ENCODE measurements at regions of chr16 and their contacts with region 1.

Region 1: DNA sequence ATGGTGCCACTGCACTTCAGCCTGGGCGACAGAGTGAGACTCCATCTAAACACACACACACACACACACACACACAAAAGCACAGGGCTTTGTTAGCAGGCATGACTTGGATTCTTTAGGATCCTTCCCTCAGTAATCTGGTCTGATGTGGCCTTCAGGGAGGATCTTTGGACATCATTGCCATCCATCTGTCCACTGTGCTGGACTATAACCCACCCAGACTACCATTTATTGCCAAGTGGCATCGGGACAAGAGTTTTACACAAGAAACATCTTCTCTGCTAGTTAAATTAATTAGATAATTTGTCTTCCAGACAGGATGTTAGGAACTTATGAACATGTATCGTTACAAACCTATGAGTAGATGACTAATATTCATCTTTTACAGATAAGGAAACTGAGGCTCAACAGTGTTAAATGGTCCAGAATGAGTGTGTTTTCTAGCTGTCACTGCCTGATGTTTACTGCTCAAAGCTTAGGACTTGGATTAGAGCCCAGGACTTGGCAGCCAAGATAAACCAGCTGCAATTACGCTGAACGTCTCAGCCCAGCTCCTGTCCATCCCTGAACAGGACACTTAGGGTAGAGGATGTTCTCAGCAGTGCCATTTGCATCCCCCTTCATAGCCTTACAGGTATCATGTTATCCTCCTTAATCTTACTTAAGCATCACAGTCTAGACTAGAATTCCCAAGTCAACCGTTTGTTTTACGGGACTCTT is 285.8 kb downstream of the WWOX start:
- DNase-seq: no peak
- ATAC-seq: peak in 1 of 8 donors; percentile 27
- H3K4me3 ChIP-seq: no peak overlapping the region
- H3K27ac ChIP-seq: no peak overlapping the region
- H3K4me1 ChIP-seq: peaks cover 0 to 23% (median 10%) of the 10 kb centered on the region in 9 donors
- H3K27me3 ChIP-seq: no peaks in the 10 kb centered on the region
- CTCF ChIP-seq: no peak

Region 2: DNA sequence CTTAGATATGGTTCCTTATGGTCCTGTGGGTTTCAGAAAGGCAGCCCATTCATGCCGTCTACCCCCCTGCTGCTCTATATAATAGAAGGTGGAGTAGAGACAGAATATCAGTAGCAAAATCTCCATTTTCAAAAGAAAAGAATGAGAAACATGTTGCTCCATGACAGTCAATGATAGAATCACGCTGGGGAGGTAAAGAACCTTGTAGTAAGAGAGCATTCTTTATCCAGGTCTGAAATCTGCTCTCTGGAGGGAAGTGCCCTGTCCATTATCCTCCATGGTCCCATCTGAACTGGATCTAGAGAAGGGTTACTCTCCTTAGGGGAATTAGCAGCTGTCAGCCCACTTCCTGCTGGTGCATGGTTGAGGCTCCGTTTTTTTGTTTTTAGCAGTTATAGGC is 12.9 kb before region 1 on chr16:
- intact Hi-C with region 1: loop called in 1 of 10 experiments (anchors 2 kb)
- DNase-seq: no peak
- ATAC-seq: no peak
- H3K4me3 ChIP-seq: no peak overlapping the region
- H3K27ac ChIP-seq: no peak overlapping the region
- H3K4me1 ChIP-seq: peaks cover 0 to 5% (median 0%) of the 10 kb centered on the region in 9 donors
- H3K27me3 ChIP-seq: no peaks in the 10 kb centered on the region
- CTCF ChIP-seq: no peak